Activated CD4-positive, alpha-beta memory T cell treated with anti-CD3 and anti-CD28 coated beads, Interleukin-2, amount 10 ng/mL, durations not matched to agents 7 days and 5 days (primary cell): ENCODE measurements at regions of chr1 and their contacts with region 1.

Region 1: DNA sequence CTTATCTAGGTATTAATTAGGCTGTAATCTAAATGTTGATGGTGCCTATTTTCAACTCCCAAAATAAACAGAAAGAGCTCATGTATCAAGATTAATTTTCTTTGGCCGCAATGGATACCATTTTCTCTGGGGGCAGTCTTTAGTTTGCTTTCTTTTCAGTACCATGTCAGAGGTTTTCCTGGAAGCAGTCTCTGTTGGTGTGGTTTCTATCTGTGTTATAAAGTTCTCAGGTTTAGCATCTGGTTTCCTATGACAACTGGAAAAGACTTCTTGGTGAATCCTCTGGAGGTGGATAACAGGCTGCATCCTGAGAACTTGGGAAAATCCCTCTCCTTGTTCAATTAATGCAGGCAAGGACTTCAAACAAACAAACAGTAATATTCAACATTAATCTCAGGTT is 38.7 kb upstream of the BATF3 start:
- DNase-seq: no peak
- H3K4me3 Mint-ChIP-seq: peak overlapping the region; percentile 19
- H3K27ac Mint-ChIP-seq: peak overlapping the region; percentile 88
- H3K4me1 Mint-ChIP-seq: peaks cover 43% of the 10 kb centered on the region
- H3K27me3 Mint-ChIP-seq: no peaks in the 10 kb centered on the region

Region 2: DNA sequence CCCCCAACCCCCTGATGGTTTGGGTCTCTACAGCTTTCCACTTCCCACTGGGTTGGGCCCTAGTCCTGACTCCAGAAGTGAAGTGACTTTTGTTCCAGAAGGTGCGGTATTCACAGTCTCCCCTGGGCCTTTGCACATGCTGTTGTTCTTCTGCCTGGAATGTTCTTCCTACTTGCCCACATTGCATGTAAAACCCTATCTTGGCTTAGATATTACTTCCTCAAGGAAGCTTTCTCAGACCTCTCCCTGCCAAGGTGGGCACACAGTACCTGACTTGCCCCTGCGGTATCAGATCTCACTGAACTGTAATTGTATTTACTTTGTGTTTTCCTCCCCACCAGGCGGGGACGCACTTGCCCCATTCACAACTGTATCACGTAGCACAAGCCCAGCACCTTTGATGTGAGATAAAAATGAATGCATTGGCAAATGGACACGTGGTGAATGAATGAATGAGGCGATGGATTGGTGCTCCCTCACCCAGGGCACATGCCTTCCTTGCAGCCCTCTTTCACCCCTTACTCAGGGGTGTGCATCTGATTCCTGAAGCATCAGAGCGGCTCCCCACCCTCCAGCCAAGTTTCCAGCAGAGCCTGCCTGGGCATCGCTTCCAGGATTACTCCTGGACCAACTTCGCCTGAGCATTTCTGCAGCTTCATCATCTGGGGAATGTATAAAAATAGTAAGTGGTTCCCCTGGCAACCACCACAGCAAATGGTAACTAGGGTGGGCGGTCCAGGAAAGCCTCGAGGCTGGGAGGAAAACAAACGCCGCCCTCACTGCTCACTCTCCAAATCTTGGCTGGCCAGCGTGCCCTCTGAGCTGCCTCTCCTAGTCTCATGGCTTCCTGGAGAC is 285.8 kb before region 1 on chr1:
- CTCF ChIA-PET with region 1: no interaction called
- POLR2A ChIA-PET with region 1: no interaction called
- DNase-seq: no peak
- H3K4me3 Mint-ChIP-seq: no peak overlapping the region
- H3K27ac Mint-ChIP-seq: no peak overlapping the region
- H3K4me1 Mint-ChIP-seq: no peaks in the 10 kb centered on the region
- H3K27me3 Mint-ChIP-seq: no peaks in the 10 kb centered on the region

Region 3: DNA sequence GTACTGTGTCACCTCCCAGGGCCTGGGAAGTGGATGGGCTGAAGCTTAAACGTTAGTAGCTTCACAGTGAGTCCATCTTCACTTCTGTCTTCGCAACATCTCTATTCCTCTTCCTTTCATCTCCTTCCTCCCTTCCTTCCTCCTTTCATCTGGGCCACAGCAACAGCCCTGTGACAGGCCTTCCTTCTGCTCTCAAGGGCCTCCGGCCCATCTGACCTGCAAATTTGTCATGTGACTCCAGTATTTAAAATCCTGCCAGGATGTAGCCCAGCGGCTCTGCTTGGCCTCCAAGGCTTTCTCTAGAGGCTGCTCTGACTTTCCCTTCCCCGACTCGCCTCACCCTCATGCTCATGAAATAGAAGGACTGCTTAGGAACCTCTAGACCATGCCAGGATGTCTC is 27.8 kb before region 1 on chr1:
- CTCF ChIA-PET with region 1: no interaction called
- POLR2A ChIA-PET with region 1: no interaction called
- DNase-seq: no peak
- H3K4me3 Mint-ChIP-seq: no peak overlapping the region
- H3K27ac Mint-ChIP-seq: no peak overlapping the region
- H3K4me1 Mint-ChIP-seq: peaks cover 24% of the 10 kb centered on the region
- H3K27me3 Mint-ChIP-seq: no peaks in the 10 kb centered on the region

Region 4: GRCh38 chr1:212721388-212722247 is 16.7 kb before region 1 on chr1:
- CTCF ChIA-PET with region 1: interaction called, 10 read pairs
- POLR2A ChIA-PET with region 1: interaction called, 10 read pairs
- DNase-seq: peak; percentile 67
- H3K4me3 Mint-ChIP-seq: peak overlapping the region; percentile 66
- H3K27ac Mint-ChIP-seq: peak overlapping the region; percentile 92
- H3K4me1 Mint-ChIP-seq: peaks cover 57% of the 10 kb centered on the region
- H3K27me3 Mint-ChIP-seq: no peaks in the 10 kb centered on the region

Region 5: DNA sequence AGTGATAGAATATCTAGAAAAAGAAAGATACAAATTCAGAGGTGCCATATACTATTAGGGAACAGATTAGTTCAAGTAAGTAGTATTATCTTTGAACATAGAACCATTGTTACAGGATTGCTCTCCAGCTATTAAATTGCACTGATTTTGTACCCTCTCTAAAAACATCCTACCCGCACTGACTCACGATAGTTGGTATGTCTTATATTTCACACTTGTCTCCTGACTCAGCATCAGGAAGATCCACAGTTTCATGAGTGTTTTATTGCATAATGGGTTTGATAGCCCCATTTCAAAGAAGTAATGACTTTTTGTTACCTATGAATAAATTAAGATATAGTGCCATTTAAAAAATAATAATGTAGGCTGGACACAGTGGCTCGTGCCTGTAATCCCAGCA is 59.4 kb after region 1 on chr1:
- CTCF ChIA-PET with region 1: no interaction called
- POLR2A ChIA-PET with region 1: no interaction called
- DNase-seq: no peak
- H3K4me3 Mint-ChIP-seq: no peak overlapping the region
- H3K27ac Mint-ChIP-seq: no peak overlapping the region
- H3K4me1 Mint-ChIP-seq: peaks cover 23% of the 10 kb centered on the region
- H3K27me3 Mint-ChIP-seq: no peaks in the 10 kb centered on the region

Region 6: GRCh38 chr1:213256438-213257087 is 518.2 kb after region 1 on chr1:
- CTCF ChIA-PET with region 1: no interaction called
- POLR2A ChIA-PET with region 1: no interaction called
- DNase-seq: no peak
- H3K4me3 Mint-ChIP-seq: no peak overlapping the region
- H3K27ac Mint-ChIP-seq: no peak overlapping the region
- H3K4me1 Mint-ChIP-seq: no peaks in the 10 kb centered on the region
- H3K27me3 Mint-ChIP-seq: no peaks in the 10 kb centered on the region